Activated naive CD4-positive, alpha-beta T cell treated with anti-CD3 and anti-CD28 coated beads for 36 hours (primary cell): ENCODE measurements at regions of chr5 and their contacts with region 1.

Region 1: GRCh38 chr5:35436410-35437057 is 181.1 kb upstream of the SPEF2 start:
- DNase-seq: peak; percentile 7
- H3K4me3 Mint-ChIP-seq: no peak overlapping the region
- H3K27ac Mint-ChIP-seq: no peak overlapping the region
- H3K4me1 Mint-ChIP-seq: no peaks in the 10 kb centered on the region
- H3K27me3 Mint-ChIP-seq: peaks cover 44% of the 10 kb centered on the region

Region 2: DNA sequence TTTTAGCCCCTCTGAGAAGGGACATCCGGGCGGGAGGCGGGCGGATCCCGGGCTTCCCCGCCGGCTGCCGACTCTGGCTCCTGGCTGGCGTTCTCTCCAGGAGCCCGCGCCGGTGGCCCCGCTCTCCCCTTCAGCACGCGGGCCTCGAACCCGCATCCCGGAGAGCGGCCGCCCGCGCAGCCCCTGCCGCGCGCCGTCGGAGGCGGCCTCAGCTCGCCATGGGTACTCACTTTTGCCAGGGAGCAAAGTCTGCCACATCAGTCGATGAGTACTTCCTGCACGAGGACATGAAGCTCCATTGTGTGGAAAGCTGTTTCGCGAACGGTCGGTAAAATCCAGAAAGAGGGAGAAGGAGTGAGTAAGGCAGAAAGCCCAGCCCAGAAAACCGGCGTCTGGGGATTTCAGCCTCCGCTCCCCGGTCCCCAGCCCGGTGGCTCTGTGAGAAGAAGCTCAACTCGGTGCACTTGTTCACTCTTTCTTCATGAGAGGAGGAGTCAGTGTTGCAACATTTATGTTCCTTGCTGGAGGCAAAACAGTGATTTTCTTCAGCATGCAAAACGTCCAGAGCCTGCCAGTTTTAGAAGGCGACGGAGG is 206.4 kb before region 1 on chr5 and contains the start of gene PRLR:
- CTCF ChIA-PET with region 1: no interaction called
- intact Hi-C with region 1: loop called (anchors 10 kb)
- DNase-seq: peak; percentile 6
- H3K4me3 Mint-ChIP-seq: peak within 1 kb of the TSS; percentile 58
- H3K27ac Mint-ChIP-seq: no peak within 1 kb of the TSS
- H3K4me1 Mint-ChIP-seq: peaks cover 6% of the 10 kb centered on the region
- H3K27me3 Mint-ChIP-seq: peaks cover 56% of the 10 kb centered on the region
- total RNA-seq, gene PRLR: not detected

Region 3: GRCh38 chr5:35644543-35644942 is 208.0 kb after region 1 on chr5:
- CTCF ChIA-PET with region 1: no interaction called
- intact Hi-C with region 1: no loop called
- DNase-seq: no peak
- H3K4me3 Mint-ChIP-seq: no peak overlapping the region
- H3K27ac Mint-ChIP-seq: no peak overlapping the region
- H3K4me1 Mint-ChIP-seq: no peaks in the 10 kb centered on the region
- H3K27me3 Mint-ChIP-seq: no peaks in the 10 kb centered on the region